ENCODE measurements at regions of chr9 and their contacts with region 1.

Region 1: DNA sequence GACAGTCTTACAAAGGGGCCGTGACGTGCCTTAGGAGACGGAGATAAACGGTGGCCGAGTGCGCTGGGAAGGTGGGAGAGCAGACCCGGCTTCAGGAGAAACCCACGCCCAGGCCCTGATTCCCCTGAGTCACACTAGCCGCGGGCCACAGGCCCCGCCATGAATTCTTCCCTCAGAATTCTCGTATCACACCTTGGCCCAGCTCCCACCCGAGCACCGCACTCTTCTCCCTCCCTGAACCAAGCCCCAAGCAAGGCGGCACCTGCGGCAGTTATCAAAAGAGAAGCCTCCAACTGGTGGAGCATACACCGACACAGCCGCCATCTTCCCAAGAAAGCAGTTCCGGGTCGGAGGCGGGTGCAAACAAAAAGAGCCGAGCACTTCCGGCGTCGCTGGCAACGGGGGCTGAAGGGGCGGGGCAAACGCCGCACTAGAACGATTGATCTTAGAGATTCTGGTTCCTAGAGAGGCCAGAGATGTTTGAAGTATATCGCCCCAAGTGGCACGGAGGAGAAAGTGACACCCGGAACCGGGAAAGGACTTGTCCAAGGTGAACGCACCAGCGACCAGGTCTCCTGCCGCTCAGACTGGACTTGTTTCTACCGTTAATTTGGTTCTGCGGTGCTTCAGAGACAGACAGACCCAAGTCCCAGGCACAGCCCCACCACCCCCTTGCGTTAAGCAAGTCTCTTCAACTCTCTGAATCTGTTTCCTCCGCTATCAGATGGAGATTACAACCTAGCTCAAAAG is at the start of gene PSMB7:
- DNase-seq: peak; percentile 90
- H3K4me3 ChIP-seq: peak within 1 kb of the TSS; percentile 60 to 82 (median 77)
- H3K27ac ChIP-seq: peak within 1 kb of the TSS; percentile 77
- H3K4me1 ChIP-seq: peaks cover 38% of the 10 kb centered on the region
- H3K27me3 ChIP-seq: no peaks in the 10 kb centered on the region
- CTCF ChIP-seq: peak; percentile 68 to 84
- total RNA-seq, gene PSMB7: 124 to 213 TPM

Region 2: DNA sequence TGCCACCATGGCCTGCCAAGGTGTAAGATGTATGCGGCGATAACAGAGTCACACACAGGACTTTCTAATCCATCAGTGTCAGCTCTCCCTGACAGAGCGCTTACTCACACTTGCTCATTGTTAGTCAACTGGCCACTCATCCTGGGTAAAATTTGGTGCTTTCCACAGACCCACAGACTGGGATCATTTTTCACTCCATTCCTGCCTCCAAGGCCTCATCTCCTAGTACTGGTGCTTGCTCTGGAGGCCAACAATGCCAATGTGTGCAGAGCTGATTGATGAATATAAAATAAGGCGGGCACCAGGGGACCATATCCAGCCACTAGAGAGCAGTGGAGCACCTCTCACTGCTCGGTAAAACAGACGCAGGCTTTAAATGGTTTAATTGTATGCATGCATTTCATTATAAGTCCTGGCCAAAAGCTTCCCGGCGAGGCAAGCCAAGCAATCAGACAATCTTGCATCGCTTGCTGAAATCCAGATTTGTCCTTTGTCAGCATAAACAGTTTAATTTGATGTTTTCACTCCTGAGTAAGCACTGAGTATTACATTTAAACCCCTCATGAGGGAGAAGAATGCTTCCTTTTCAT is 22.3 kb before region 1 on chr9:
- CTCF ChIA-PET with region 1: interaction called, 5 read pairs
- dilution Hi-C with region 1: no loop called
- in situ Hi-C with region 1: no loop called
- intact Hi-C with region 1: loop called (anchors 1 kb)
- DNase-seq: peak; percentile 99
- H3K4me3 ChIP-seq: no peak overlapping the region
- H3K27ac ChIP-seq: peak overlapping the region; percentile 43
- H3K4me1 ChIP-seq: peaks cover 32% of the 10 kb centered on the region
- H3K27me3 ChIP-seq: no peaks in the 10 kb centered on the region
- CTCF ChIP-seq: peak; percentile 53 to 57

Region 3: DNA sequence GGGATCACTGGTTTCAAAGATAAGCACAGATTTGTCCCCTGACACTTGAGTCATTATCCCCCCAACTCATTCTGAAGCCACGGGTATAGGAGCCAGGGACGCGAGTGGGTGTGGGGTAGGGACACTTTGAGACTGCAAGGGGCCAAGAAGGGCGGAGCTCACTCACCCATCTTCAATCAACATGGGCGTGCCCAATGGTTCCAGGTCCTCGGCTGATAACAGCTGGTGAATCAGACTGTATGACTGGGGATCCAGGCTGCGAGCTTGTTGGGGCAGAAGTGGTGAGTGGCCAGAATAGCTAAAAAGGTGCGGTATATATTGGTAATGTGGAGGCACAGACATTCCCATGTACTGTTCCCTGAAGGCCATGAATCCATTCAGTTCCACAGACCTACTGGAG is 122.6 kb after region 1 on chr9:
- CTCF ChIA-PET with region 1: no interaction called
- dilution Hi-C with region 1: loop called (anchors 5 kb)
- in situ Hi-C with region 1: loop called (anchors 5 kb)
- intact Hi-C with region 1: loop called (anchors 1 kb)
- DNase-seq: no peak
- H3K4me3 ChIP-seq: no peak overlapping the region
- H3K27ac ChIP-seq: no peak overlapping the region
- H3K4me1 ChIP-seq: no peaks in the 10 kb centered on the region
- H3K27me3 ChIP-seq: no peaks in the 10 kb centered on the region
- CTCF ChIP-seq: no peak

Region 4: GRCh38 chr9:124658165-124659017 is 243.1 kb after region 1 on chr9:
- CTCF ChIA-PET with region 1: no interaction called
- dilution Hi-C with region 1: no loop called
- in situ Hi-C with region 1: no loop called
- intact Hi-C with region 1: loop called (anchors 5 kb)
- DNase-seq: peak; percentile 94
- H3K4me3 ChIP-seq: peak overlapping the region; percentile 49 to 95 (median 73)
- H3K27ac ChIP-seq: peak overlapping the region; percentile 95
- H3K4me1 ChIP-seq: peaks cover 17% of the 10 kb centered on the region
- H3K27me3 ChIP-seq: no peaks in the 10 kb centered on the region
- CTCF ChIP-seq: no peak

Region 5: GRCh38 chr9:124721109-124721906 is 306.0 kb after region 1 on chr9:
- CTCF ChIA-PET with region 1: no interaction called
- dilution Hi-C with region 1: no loop called
- in situ Hi-C with region 1: loop called in 1 of 2 experiments (anchors 25 kb)
- intact Hi-C with region 1: no loop called
- DNase-seq: no peak
- H3K4me3 ChIP-seq: no peak overlapping the region
- H3K27ac ChIP-seq: no peak overlapping the region
- H3K4me1 ChIP-seq: peaks cover 6% of the 10 kb centered on the region
- H3K27me3 ChIP-seq: no peaks in the 10 kb centered on the region
- CTCF ChIP-seq: no peak

Region 6: DNA sequence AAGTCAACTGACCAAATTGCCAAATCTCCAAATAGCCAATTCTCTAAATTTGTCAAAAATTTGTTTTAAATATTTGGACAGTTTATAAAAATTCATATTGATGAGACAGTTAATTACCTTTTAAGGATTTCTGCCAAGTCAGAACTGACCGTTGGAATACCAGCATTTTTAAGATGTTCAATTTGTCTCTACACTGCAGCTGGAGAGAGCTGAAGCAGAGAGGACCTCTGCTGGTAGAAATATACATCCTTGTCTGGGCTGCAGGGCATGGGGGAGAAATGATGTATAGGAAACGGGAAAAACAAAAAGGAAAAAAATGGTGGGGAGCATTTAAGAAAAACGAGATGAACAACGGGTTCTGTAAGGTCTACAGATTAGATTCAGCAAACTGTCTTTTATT is 339.0 kb after region 1 on chr9:
- CTCF ChIA-PET with region 1: no interaction called
- dilution Hi-C with region 1: no loop called
- in situ Hi-C with region 1: no loop called
- intact Hi-C with region 1: loop called (anchors 10 kb)
- DNase-seq: no peak
- H3K4me3 ChIP-seq: no peak overlapping the region
- H3K27ac ChIP-seq: no peak overlapping the region
- H3K4me1 ChIP-seq: peaks cover 14% of the 10 kb centered on the region
- H3K27me3 ChIP-seq: no peaks in the 10 kb centered on the region
- CTCF ChIP-seq: peak; percentile 36 to 65

Region 7: DNA sequence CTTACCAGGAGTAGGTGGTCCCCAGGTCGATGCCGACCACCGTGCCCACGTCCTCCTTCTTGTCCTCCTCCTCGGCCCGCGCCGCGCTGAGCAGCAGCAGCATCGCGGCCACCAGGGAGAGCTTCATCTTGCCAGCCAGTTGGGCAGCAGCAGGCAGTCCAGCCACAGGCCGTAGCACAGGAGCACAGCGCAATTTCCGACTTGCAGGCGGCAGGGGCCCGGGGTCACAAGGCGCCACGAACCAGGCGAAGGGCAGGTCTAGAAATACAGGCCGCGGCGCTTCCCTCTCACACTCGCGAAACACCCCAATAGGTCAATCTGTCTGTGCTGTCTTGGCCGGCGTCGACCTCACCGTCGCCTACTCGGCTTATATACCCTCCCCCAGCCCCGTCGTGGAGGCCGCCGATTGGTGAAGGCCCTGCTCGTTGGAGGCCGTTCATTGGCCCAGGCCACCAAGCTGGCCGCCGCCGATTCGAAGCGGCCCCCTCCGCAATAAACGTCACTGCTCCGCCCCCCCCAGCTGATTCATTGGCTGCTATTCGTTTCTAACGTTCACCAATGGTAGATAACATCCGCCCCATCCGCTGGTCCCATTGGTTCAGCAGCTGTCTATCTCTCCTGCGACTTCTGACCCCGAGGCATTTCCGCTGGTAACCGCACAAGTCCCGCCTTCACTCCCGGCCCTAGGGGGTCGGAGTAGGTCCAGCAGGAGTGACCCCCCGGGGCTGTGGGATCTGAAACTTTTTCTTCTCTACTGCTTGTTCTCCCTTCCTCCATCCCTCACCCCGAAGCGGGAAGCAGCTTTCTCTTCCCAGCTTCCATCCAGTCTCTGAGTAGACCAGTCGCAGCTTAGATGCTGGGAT is 826.0 kb after region 1 on chr9 and contains the start of gene HSPA5:
- CTCF ChIA-PET with region 1: no interaction called
- dilution Hi-C with region 1: no loop called
- in situ Hi-C with region 1: no loop called
- intact Hi-C with region 1: loop called (anchors 5 kb)
- DNase-seq: peak; percentile 99
- H3K4me3 ChIP-seq: peak within 1 kb of the TSS; percentile 89 to 100 (median 96)
- H3K27ac ChIP-seq: peak within 1 kb of the TSS; percentile 87
- H3K4me1 ChIP-seq: peaks cover 35% of the 10 kb centered on the region
- H3K27me3 ChIP-seq: no peaks in the 10 kb centered on the region
- CTCF ChIP-seq: peak in 1 of 2 donors; percentile 20
- total RNA-seq, gene HSPA5: 126 to 485 TPM

Measured in mammary epithelial cell (primary cell).